ENCODE measurements at regions of chr6 and their contacts with region 1.

Region 1: DNA sequence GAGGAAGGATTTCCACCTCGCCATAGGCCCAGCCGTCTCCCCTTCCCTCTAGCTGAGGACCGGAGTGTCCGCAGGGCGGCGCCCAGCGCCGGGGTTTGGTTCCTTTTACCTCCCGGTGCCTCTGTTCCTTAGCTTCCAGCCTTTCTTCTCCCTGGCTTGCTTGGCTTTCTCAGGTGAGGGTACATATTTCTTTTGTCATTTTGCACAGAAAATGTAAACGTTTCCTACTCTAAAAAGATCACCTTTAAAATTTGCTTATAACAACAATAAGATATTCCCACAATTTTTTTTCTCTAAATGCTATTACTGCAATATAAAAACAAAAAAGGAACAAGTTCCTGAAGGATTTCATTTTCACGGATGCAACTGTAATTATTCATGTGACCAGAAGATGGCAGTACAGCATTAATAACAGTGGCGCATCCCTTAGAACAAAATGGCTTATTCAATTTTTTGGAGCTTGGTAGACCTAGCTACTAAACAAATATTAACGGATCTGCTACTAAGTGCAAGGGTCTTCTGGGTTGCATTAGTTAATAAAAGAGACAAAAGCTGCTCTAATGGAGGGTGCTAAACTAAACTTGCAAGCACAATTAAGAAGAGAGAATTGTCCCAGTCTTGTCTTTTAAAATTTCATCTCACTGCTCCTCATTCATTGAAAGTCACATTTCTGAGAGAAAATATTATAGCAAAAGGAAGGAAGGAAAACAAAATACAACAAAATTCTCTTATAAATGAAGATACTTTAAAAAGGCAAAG is 172.9 kb downstream of the ADGRG6 start:
- DNase-seq: peak; percentile 64
- H3K4me3 Mint-ChIP-seq: no peak overlapping the region
- H3K27ac Mint-ChIP-seq: no peak overlapping the region
- H3K4me1 Mint-ChIP-seq: peaks cover 5% of the 10 kb centered on the region
- H3K27me3 Mint-ChIP-seq: peaks cover 3% of the 10 kb centered on the region

Region 2: GRCh38 chr6:142692942-142693341 is 218.2 kb after region 1 on chr6:
- intact Hi-C with region 1: loop called (anchors 10 kb)
- DNase-seq: peak; percentile 88
- H3K4me3 Mint-ChIP-seq: no peak overlapping the region
- H3K27ac Mint-ChIP-seq: peak overlapping the region; percentile 2
- H3K4me1 Mint-ChIP-seq: peaks cover 15% of the 10 kb centered on the region
- H3K27me3 Mint-ChIP-seq: no peaks in the 10 kb centered on the region

Region 3: DNA sequence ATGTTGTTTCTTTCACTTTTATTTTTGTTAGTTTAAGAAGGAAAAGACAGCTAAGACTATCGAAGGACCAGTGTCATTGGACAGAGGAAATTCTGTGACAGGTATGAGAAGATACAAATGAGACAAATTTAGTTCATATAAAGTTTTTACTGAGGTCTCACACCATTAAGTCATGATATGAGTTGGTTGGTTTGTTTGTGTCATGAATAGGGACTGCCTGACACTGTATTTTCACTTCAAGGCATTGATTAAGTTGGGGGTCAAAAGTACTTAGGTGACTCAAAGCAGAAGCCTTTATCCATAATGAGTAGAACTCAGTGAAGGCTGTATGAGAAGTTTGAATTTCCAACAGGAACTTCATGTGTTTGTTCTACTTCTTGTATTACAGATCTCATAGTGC is 491.6 kb after region 1 on chr6:
- intact Hi-C with region 1: no loop called
- DNase-seq: no peak
- H3K4me3 Mint-ChIP-seq: no peak overlapping the region
- H3K27ac Mint-ChIP-seq: no peak overlapping the region
- H3K4me1 Mint-ChIP-seq: no peaks in the 10 kb centered on the region
- H3K27me3 Mint-ChIP-seq: no peaks in the 10 kb centered on the region

Region 4: GRCh38 chr6:143026696-143027449 is 552.2 kb after region 1 on chr6:
- intact Hi-C with region 1: loop called (anchors 10 kb)
- DNase-seq: peak; percentile 82
- H3K4me3 Mint-ChIP-seq: no peak overlapping the region
- H3K27ac Mint-ChIP-seq: no peak overlapping the region
- H3K4me1 Mint-ChIP-seq: peaks cover 4% of the 10 kb centered on the region
- H3K27me3 Mint-ChIP-seq: no peaks in the 10 kb centered on the region

Region 5: DNA sequence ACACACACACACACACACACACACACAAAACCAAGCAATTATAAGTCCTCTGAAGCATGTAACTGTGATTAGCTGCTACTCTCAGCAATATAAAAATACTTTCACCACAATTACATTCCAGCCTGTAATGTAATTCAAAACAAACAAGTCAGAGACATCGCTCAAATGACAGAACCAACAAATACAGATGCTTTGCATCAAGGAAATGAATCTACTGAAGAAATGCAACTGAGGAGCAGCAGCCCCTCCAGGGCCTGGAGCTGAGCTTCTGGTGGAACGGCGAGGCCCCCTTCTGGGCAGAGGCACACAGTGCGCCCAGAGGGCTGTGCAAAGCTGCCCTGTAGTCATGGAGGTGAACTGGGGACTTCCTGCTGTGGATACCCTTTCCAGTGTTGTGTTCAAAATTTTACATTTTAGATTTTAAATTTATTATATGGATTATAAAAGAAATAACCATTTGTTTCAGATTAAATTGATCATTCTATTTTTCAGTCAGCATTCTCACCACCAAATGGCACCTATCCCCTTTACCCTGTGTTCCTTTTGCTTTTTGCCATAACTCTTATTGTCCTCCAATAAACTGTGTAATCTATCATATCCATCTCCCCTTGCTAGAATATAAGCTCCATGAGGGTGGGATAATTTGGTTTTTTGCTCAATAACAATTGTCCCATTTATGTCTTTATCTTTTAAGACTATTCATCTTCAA is 952.6 kb after region 1 on chr6:
- intact Hi-C with region 1: loop called (anchors 1 kb)
- DNase-seq: peak; percentile 92
- H3K4me3 Mint-ChIP-seq: no peak overlapping the region
- H3K27ac Mint-ChIP-seq: no peak overlapping the region
- H3K4me1 Mint-ChIP-seq: peaks cover 9% of the 10 kb centered on the region
- H3K27me3 Mint-ChIP-seq: no peaks in the 10 kb centered on the region

Region 6: GRCh38 chr6:143510991-143511891 is 1036.5 kb after region 1 on chr6 and contains the start of gene FUCA2:
- intact Hi-C with region 1: loop called (anchors 10 kb)
- DNase-seq: peak; percentile 92
- H3K4me3 Mint-ChIP-seq: peak within 1 kb of the TSS; percentile 97
- H3K27ac Mint-ChIP-seq: peak within 1 kb of the TSS; percentile 99
- H3K4me1 Mint-ChIP-seq: peaks cover 34% of the 10 kb centered on the region
- H3K27me3 Mint-ChIP-seq: no peaks in the 10 kb centered on the region
- total RNA-seq, gene FUCA2: 14.4 and 16.1 TPM in 2 replicates

Region 7: GRCh38 chr6:143575440-143575839 is 1100.7 kb after region 1 on chr6:
- intact Hi-C with region 1: loop called (anchors 10 kb)
- DNase-seq: peak; percentile 88
- H3K4me3 Mint-ChIP-seq: no peak overlapping the region
- H3K27ac Mint-ChIP-seq: no peak overlapping the region
- H3K4me1 Mint-ChIP-seq: peaks cover 5% of the 10 kb centered on the region
- H3K27me3 Mint-ChIP-seq: no peaks in the 10 kb centered on the region

Region 8: DNA sequence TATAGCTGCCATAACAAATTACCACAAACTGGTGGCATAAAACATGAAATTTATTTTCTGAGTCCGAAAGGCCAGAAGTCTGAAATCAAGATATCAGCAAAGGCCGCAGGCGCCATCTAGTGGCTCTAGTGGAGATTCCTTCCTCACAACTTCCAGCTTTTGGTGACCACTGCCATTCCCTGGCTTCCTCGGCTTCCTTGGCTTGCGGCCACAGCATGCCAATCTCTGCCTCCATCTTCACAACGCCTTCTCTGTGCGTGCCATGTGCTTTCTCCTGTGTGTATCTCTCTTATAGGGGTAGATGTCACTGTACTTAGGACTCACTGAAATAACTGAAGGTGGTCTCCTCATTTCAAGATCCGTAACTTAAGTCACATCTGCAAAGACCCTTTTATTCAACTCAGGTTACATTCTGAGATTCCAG is 1538.8 kb after region 1 on chr6:
- intact Hi-C with region 1: loop called (anchors 5 kb)
- DNase-seq: peak; percentile 87
- H3K4me3 Mint-ChIP-seq: no peak overlapping the region
- H3K27ac Mint-ChIP-seq: no peak overlapping the region
- H3K4me1 Mint-ChIP-seq: peaks cover 12% of the 10 kb centered on the region
- H3K27me3 Mint-ChIP-seq: peaks cover 30% of the 10 kb centered on the region

Measured in activated CD4-positive, alpha-beta T cell treated with anti-CD3 and anti-CD28 coated beads, Interleukin-2, amount 10 ng/mL, durations not matched to agents 24 days and 14 days (primary cell).